Testis (tissue), 5 donors: ENCODE measurements at regions of chr4 and their contacts with region 1.

Region 1: DNA sequence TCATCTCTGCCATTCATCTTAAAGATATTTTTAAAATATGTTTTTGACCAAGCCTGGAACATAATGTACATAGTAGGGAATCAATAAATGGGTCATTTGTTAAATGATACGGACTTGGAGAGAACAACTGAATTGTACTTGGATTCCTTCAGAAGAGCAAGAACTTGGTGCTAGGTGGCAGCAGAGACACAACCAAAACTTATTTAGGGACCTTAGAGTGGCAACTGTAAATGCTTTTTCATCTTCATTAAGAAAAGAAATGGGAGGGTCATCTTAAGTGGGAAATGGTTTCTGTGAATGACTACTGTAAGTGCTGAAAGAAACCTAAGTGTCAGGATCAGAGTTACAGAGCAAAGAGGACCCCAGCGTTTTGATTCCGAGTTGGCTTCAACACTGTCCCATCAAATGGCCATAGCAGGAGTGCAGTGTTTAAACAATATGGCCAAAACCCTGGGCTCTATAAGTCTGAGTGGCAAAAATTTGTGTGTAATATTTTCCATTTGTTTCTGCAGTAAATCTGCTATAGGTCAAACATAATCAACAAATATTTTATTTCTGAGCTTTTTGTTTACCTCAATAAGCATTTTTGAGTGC is 213.6 kb downstream of the PALLD start:
- DNase-seq: peak; percentile 75
- H3K4me3 ChIP-seq: no peak overlapping the region
- H3K27ac ChIP-seq: no peak overlapping the region
- H3K4me1 ChIP-seq: no peaks in the 10 kb centered on the region
- H3K27me3 ChIP-seq: no peaks in the 10 kb centered on the region
- CTCF ChIP-seq: peak in 2 of 3 experiments; percentile 50 to 66
- POLR2A ChIP-seq: no peak

Region 2: GRCh38 chr4:168153596-168154440 is 556.6 kb before region 1 on chr4:
- intact Hi-C with region 1: no loop called
- DNase-seq: peak; percentile 91
- H3K4me3 ChIP-seq: peak overlapping the region in 1 of 2 donors; percentile 18
- H3K27ac ChIP-seq: no peak overlapping the region
- H3K4me1 ChIP-seq: no peaks in the 10 kb centered on the region
- H3K27me3 ChIP-seq: no peaks in the 10 kb centered on the region
- CTCF ChIP-seq: peak in 2 of 3 experiments; percentile 34 to 53
- POLR2A ChIP-seq: no peak

Region 3: DNA sequence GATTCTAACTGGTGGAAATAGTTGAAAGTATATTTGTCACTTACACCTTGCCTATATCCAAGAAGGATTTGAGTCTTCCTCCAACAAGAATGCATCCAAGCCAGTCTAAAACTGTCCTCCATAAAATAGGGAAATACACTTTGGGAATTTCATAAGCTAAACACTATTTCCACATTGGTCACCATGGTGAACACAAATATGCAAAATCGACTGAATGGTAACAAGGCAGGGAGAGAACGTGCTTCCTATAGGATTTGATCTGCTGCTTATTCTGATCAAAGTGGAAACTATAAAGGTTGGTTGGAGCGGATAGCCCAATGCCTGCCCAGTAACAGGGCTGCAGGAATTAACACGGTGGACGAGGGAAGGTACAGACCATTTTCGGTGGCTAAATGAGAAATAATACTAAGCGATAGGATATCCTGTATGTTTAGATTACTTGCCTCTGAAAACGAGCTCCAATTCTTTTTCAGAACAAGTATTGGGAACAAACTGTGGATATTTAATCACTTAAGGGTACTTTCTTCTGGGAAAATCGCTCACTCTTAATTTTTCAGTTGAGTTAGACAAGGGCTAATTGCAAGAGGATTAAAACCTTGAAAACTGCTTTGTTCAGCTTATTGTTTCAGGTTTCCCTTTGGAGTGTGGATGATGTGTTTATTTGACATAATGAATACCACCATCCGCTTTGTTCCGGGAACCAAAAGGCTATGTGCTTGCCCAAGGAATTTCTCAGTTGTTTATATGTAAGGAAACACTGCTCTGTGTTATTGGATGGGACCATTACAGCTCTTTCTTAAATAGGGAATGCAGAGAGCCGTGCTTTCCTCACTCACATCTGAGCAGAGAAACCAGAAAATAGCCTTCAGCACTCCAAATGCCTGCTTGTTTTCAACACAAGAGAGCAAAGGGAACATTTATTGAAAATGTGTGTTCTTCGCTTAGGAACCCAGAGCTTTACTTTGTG is 105.2 kb after region 1 on chr4:
- intact Hi-C with region 1: loop called (anchors 10 kb)
- DNase-seq: no peak
- H3K4me3 ChIP-seq: no peak overlapping the region
- H3K27ac ChIP-seq: peak overlapping the region; percentile 50 to 81
- H3K4me1 ChIP-seq: peaks cover 15% of the 10 kb centered on the region
- H3K27me3 ChIP-seq: no peaks in the 10 kb centered on the region
- CTCF ChIP-seq: no peak
- POLR2A ChIP-seq: no peak

Region 4: GRCh38 chr4:168917138-168917779 is 206.8 kb after region 1 on chr4:
- intact Hi-C with region 1: loop called (anchors 10 kb)
- DNase-seq: no peak
- H3K4me3 ChIP-seq: no peak overlapping the region
- H3K27ac ChIP-seq: no peak overlapping the region
- H3K4me1 ChIP-seq: peaks cover 3% of the 10 kb centered on the region
- H3K27me3 ChIP-seq: no peaks in the 10 kb centered on the region
- CTCF ChIP-seq: peak; percentile 42 to 55 (median 45)
- POLR2A ChIP-seq: no peak